Posterior vena cava (tissue), 2 donors: ENCODE measurements at regions of chr2 and their contacts with region 1.

Region 1: DNA sequence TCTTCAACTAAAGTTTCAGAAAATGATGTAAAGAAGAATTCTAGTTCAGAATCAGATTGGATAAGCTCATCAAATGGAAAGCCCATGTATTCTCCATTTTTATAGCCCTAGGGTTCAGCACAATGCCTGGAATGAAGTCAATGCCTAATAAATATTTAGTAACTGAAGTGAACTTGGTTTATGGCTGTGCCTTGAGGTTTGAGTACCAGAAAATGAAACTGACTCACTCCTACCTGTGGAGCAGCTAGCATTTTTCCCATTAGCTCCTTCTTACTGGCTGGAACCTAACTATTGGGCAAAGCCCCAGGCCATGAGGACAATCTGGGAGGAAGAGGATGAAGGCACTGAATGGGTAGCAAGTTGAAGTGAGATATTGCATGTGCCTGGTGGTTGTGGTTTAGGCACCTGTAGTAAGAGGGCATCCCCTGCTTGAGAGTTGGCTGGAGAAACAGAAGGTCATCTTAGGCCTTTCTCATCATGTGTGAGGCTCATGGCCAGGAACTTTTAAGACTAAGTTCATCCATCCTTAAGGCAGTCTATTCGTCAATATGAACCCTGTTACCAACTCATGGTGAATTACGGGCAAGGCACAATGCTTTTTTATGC is 85.0 kb upstream of the LYPD1 start:
- DNase-seq: no peak

Region 2: GRCh38 chr2:132278267-132278666 is 476.7 kb before region 1 on chr2:
- intact Hi-C with region 1: no loop called
- DNase-seq: no peak

Region 3: DNA sequence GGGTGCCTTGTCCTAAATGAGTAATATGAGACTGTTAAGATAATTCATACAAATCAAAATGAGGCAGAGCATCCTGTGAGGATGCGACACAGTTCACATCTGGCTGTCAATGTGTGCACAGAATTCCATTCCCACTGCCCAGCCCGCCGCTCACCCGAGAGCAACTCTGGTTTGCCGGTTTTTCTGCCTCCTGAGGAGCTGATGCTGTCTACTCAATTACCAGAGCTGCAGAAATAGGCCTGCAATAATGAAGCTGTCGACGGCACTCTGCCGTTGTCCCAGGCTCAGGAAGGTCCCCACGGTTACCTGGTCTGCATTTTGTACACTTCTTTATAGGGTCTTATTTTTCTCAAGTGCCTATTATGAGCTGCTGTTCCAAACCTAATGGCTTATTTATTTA is 29.2 kb before region 1 on chr2:
- intact Hi-C with region 1: no loop called
- DNase-seq: no peak

Region 4: DNA sequence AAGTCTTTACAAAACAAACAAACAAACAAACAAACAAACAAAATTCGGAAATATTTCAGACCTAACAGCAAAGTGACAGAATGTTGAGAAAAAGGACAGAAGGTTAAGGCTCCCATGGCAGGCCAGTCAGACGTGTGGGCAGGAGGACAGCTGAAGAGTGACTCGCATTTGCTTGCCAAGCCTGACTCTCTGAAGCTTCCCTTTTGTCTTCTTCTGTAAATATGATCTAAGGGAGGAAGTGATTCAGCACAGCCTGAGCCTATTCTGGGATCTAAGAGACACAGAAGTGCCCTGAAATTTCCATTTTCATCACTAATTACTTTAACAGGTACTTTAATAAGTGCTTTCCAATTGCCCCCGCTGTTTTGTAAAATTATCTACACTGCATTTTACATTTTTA is 49.1 kb after region 1 on chr2:
- intact Hi-C with region 1: loop called in 1 of 2 experiments (anchors 2 kb)
- DNase-seq: no peak

Region 5: GRCh38 chr2:134549104-134549503 is 1794.1 kb after region 1 on chr2:
- intact Hi-C with region 1: no loop called
- DNase-seq: no peak